MCF 10A (cell line): ENCODE measurements at regions of chr20 and their contacts with region 1.

Region 1: GRCh38 chr20:59850018-59850641 is 83.3 kb downstream of the SYCP2 start:
- DNase-seq: peak; percentile 55
- H3K4me3 Mint-ChIP-seq: no peak overlapping the region
- H3K27ac Mint-ChIP-seq: no peak overlapping the region
- H3K4me1 Mint-ChIP-seq: peaks cover 13% of the 10 kb centered on the region
- H3K27me3 Mint-ChIP-seq: no peaks in the 10 kb centered on the region
- CTCF ChIP-seq: peak; percentile 70

Region 2: DNA sequence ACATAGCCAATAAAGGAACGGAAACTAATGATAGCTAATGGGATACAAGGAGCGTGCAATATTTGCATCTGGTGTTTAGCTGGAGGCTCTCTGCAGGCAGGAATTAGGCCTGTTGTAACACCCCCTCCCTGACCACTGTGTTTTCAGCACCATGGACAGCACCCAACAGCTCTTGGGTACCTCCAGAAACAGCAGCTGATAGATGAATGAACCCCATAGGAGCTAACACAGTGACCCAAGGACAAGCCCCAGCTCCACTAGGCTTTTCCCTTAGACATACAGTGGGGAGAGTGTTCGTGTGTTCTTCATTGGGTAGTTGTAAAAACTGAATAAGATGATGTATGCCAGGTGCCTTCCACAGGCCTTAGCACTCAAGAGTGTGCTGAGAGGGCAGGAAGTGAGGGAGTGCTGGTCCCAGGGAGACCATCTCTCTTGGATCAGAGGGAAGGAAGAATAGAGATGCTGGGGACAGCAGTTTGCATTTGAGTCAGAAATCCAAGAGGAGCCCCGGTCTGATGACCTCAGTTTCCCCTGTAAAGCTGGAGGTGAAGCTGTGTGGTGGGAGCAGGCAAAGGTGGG is 84.4 kb before region 1 on chr20:
- CTCF ChIA-PET with region 1: interaction called, 159 read pairs
- POLR2A ChIA-PET with region 1: interaction called, 3 read pairs
- intact Hi-C with region 1: no loop called
- DNase-seq: peak; percentile 52
- H3K4me3 Mint-ChIP-seq: no peak overlapping the region
- H3K27ac Mint-ChIP-seq: no peak overlapping the region
- H3K4me1 Mint-ChIP-seq: no peaks in the 10 kb centered on the region
- H3K27me3 Mint-ChIP-seq: peaks cover 47% of the 10 kb centered on the region
- CTCF ChIP-seq: no peak

Region 3: GRCh38 chr20:59772931-59773913 is 76.9 kb before region 1 on chr20:
- CTCF ChIA-PET with region 1: interaction called, 159 read pairs
- POLR2A ChIA-PET with region 1: interaction called, 3 read pairs
- intact Hi-C with region 1: no loop called
- DNase-seq: no peak
- H3K4me3 Mint-ChIP-seq: no peak overlapping the region
- H3K27ac Mint-ChIP-seq: no peak overlapping the region
- H3K4me1 Mint-ChIP-seq: no peaks in the 10 kb centered on the region
- H3K27me3 Mint-ChIP-seq: peaks cover 38% of the 10 kb centered on the region
- CTCF ChIP-seq: no peak

Region 4: GRCh38 chr20:59820204-59821041 is 29.7 kb before region 1 on chr20:
- CTCF ChIA-PET with region 1: interaction called, 12 read pairs
- POLR2A ChIA-PET with region 1: interaction called, 5 read pairs
- intact Hi-C with region 1: no loop called
- DNase-seq: peak; percentile 22
- H3K4me3 Mint-ChIP-seq: peak overlapping the region; percentile 17
- H3K27ac Mint-ChIP-seq: peak overlapping the region; percentile 97
- H3K4me1 Mint-ChIP-seq: peaks cover 28% of the 10 kb centered on the region
- H3K27me3 Mint-ChIP-seq: no peaks in the 10 kb centered on the region
- CTCF ChIP-seq: no peak

Region 5: GRCh38 chr20:59835448-59836395 is 14.4 kb before region 1 on chr20:
- CTCF ChIA-PET with region 1: interaction called, 181 read pairs
- POLR2A ChIA-PET with region 1: interaction called, 146 read pairs
- intact Hi-C with region 1: no loop called
- DNase-seq: peak; percentile 81
- H3K4me3 Mint-ChIP-seq: peak overlapping the region; percentile 78
- H3K27ac Mint-ChIP-seq: peak overlapping the region; percentile 53
- H3K4me1 Mint-ChIP-seq: peaks cover 57% of the 10 kb centered on the region
- H3K27me3 Mint-ChIP-seq: no peaks in the 10 kb centered on the region
- CTCF ChIP-seq: no peak